ENCODE measurements at regions of chr13 and their contacts with region 1.

Region 1: GRCh38 chr13:81017513-81018152 is 676.7 kb upstream of the SPRY2 start:
- DNase-seq: no peak
- ATAC-seq: peak in 2 of 4 donors; percentile 55 to 75
- H3K4me3 ChIP-seq: peak overlapping the region; percentile 35
- H3K27ac ChIP-seq: no peak overlapping the region
- H3K4me1 ChIP-seq: no peaks in the 10 kb centered on the region
- H3K27me3 ChIP-seq: no peaks in the 10 kb centered on the region
- CTCF ChIP-seq: peak; percentile 60

Region 2: GRCh38 chr13:80633251-80633650 is 384.4 kb before region 1 on chr13:
- intact Hi-C with region 1: no loop called
- DNase-seq: no peak
- ATAC-seq: no peak
- H3K4me3 ChIP-seq: no peak overlapping the region
- H3K27ac ChIP-seq: no peak overlapping the region
- H3K4me1 ChIP-seq: no peaks in the 10 kb centered on the region
- H3K27me3 ChIP-seq: no peaks in the 10 kb centered on the region
- CTCF ChIP-seq: no peak

Region 3: GRCh38 chr13:80979035-80979641 is 38.5 kb before region 1 on chr13:
- intact Hi-C with region 1: loop called in 1 of 2 experiments (anchors 5 kb)
- DNase-seq: no peak
- ATAC-seq: peak in 2 of 4 donors; percentile 48 to 67
- H3K4me3 ChIP-seq: no peak overlapping the region
- H3K27ac ChIP-seq: no peak overlapping the region
- H3K4me1 ChIP-seq: no peaks in the 10 kb centered on the region
- H3K27me3 ChIP-seq: no peaks in the 10 kb centered on the region
- CTCF ChIP-seq: peak; percentile 75

Measured in psoas muscle (tissue), 8 donors.